GM12878 (cell line): ENCODE measurements at regions of chr2 and their contacts with region 1.

Region 1: DNA sequence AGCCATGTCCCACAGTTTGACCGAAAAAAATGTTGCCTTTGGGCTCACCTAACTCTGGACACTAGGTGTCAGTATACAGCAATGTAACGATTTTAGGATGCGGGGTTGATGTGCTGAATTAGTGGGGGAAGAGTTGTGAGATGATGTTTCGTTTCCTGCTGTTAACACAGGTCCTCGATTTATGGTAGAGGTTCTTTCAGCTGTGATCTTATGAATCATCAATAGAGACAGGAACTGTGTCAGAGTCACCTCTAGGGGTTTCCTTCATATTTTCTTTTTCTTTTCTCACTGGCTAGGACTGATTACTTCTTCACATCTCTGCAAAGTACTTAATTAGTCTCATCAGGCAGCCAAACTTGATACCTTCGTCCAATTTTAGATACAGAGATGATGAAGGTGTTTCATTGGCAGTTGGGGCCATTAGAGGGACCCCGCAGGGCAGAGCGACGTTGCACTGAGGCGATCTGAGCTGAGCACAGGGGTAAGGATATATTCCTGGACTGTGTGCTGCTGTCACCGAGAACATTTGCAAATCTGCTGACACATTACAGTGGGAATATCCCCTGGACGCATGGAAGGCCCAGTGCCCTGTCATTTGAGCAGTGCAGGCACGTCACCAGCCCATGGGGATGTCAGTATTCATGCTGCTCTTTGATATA is 10.2 kb upstream of the MMADHC start:
- DNase-seq: peak; percentile 57
- ATAC-seq: peak; percentile 96
- H3K4me3 ChIP-seq: no peak overlapping the region
- H3K27ac ChIP-seq: no peak overlapping the region
- H3K4me1 ChIP-seq: 0 out of 2 replicates have a peak, but pooled peaks cover 4% of the 10 kb centered on the region
- H3K27me3 ChIP-seq: no peaks in the 10 kb centered on the region
- CTCF ChIP-seq: peak; percentile 79 to 85 (median 85)
- EP300 ChIP-seq: no peak
- POLR2A ChIP-seq: no peak
- RAD21 ChIP-seq: peak; percentile 94

Region 2: GRCh38 chr2:149573760-149574159 is 24.0 kb before region 1 on chr2:
- CTCF ChIA-PET with region 1: no interaction called
- POLR2A ChIA-PET with region 1: no interaction called
- RAD21 ChIA-PET with region 1: no interaction called
- SMC1A ChIA-PET with region 1: no interaction called
- in situ Hi-C with region 1: no loop called
- intact Hi-C with region 1: no loop called
- DNase-seq: no peak
- ATAC-seq: no peak
- H3K4me3 ChIP-seq: no peak overlapping the region
- H3K27ac ChIP-seq: no peak overlapping the region
- H3K4me1 ChIP-seq: no peaks in the 10 kb centered on the region
- H3K27me3 ChIP-seq: no peaks in the 10 kb centered on the region
- CTCF ChIP-seq: peak in 1 of 3 experiments; percentile 2; a peak in 1 of 6 replicates
- EP300 ChIP-seq: no peak
- POLR2A ChIP-seq: no peak
- RAD21 ChIP-seq: no peak

Region 3: GRCh38 chr2:149715005-149715592 is 117.3 kb after region 1 on chr2:
- CTCF ChIA-PET with region 1: no interaction called
- POLR2A ChIA-PET with region 1: no interaction called
- RAD21 ChIA-PET with region 1: no interaction called
- SMC1A ChIA-PET with region 1: no interaction called
- in situ Hi-C with region 1: no loop called
- intact Hi-C with region 1: loop called (anchors 5 kb)
- DNase-seq: no peak
- ATAC-seq: peak; percentile 73
- H3K4me3 ChIP-seq: no peak overlapping the region
- H3K27ac ChIP-seq: no peak overlapping the region
- H3K4me1 ChIP-seq: no peaks in the 10 kb centered on the region
- H3K27me3 ChIP-seq: no peaks in the 10 kb centered on the region
- CTCF ChIP-seq: peak; percentile 37 to 45 (median 42); a peak in 5 of 6 replicates
- EP300 ChIP-seq: no peak
- POLR2A ChIP-seq: no peak
- RAD21 ChIP-seq: peak; percentile 23; the same call in 1 of the 2 replicates

Region 4: DNA sequence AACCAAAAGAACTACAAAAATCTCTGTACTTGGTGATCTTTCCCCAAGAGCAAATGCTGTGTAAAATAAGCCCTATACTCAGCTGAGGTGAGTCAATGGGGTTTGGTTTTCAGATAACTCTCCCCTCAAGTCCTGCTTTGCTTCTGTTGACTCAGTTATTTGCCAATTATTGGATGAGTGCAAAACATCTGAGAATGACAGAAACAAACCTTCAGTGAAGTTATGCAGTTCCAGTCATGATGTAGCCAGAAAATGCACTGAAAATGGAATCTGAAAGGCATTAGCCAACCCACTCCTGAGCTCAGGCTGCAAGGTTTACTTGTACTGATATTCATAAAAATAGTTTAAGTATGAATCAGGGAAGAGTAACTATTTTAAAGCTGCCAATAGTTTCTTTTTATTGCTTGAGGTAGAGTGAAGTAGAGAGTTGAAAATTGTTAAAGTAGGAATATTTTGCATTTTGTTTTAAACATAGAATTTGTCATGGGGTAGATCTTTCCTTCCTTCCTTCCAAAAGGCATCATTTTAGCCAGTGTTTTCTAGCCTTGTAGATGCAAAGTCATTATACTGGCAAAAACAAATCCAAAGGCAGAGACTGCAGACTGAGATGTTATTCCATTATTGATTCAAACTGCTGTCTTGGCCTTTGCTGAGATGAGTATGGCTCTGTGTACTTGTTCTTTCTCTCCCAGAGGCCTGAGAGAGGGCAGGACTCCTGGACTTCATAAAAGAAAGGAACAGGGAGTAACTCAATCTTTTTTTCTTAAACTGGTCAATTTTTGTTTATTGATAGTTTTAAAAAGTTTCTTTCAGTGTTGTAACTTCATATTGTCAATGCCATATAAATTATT is 674.4 kb after region 1 on chr2:
- CTCF ChIA-PET with region 1: no interaction called
- POLR2A ChIA-PET with region 1: no interaction called
- RAD21 ChIA-PET with region 1: no interaction called
- SMC1A ChIA-PET with region 1: no interaction called
- in situ Hi-C with region 1: no loop called
- intact Hi-C with region 1: no loop called
- DNase-seq: no peak
- ATAC-seq: no peak
- H3K4me3 ChIP-seq: no peak overlapping the region
- H3K27ac ChIP-seq: no peak overlapping the region
- H3K4me1 ChIP-seq: no peaks in the 10 kb centered on the region
- H3K27me3 ChIP-seq: no peaks in the 10 kb centered on the region
- CTCF ChIP-seq: no peak
- EP300 ChIP-seq: no peak
- POLR2A ChIP-seq: no peak
- RAD21 ChIP-seq: no peak

Region 5: GRCh38 chr2:150610671-150611279 is 1013.0 kb after region 1 on chr2:
- CTCF ChIA-PET with region 1: no interaction called
- POLR2A ChIA-PET with region 1: no interaction called
- RAD21 ChIA-PET with region 1: interaction called, 3 read pairs
- SMC1A ChIA-PET with region 1: no interaction called
- in situ Hi-C with region 1: loop called (anchors 10 kb)
- intact Hi-C with region 1: loop called (anchors 2 kb)
- DNase-seq: no peak
- ATAC-seq: peak; percentile 85
- H3K4me3 ChIP-seq: no peak overlapping the region
- H3K27ac ChIP-seq: no peak overlapping the region
- H3K4me1 ChIP-seq: no peaks in the 10 kb centered on the region
- H3K27me3 ChIP-seq: no peaks in the 10 kb centered on the region; a peak in 1 of 4 replicates
- CTCF ChIP-seq: peak; percentile 30 to 52 (median 46); a peak in 4 of 6 replicates
- EP300 ChIP-seq: no peak
- POLR2A ChIP-seq: no peak
- RAD21 ChIP-seq: peak; percentile 55

Region 6: GRCh38 chr2:151051574-151052220 is 1453.9 kb after region 1 on chr2:
- CTCF ChIA-PET with region 1: interaction called, 24 read pairs
- POLR2A ChIA-PET with region 1: no interaction called
- RAD21 ChIA-PET with region 1: interaction called, 13 read pairs
- SMC1A ChIA-PET with region 1: interaction called, 18 read pairs
- in situ Hi-C with region 1: loop called (anchors 5 kb)
- intact Hi-C with region 1: loop called (anchors 2 kb)
- DNase-seq: no peak
- ATAC-seq: peak; percentile 86
- H3K4me3 ChIP-seq: no peak overlapping the region
- H3K27ac ChIP-seq: no peak overlapping the region
- H3K4me1 ChIP-seq: no peaks in the 10 kb centered on the region
- H3K27me3 ChIP-seq: no peaks in the 10 kb centered on the region
- CTCF ChIP-seq: peak; percentile 67 to 81 (median 79)
- EP300 ChIP-seq: no peak
- POLR2A ChIP-seq: no peak
- RAD21 ChIP-seq: peak; percentile 72

Region 7: DNA sequence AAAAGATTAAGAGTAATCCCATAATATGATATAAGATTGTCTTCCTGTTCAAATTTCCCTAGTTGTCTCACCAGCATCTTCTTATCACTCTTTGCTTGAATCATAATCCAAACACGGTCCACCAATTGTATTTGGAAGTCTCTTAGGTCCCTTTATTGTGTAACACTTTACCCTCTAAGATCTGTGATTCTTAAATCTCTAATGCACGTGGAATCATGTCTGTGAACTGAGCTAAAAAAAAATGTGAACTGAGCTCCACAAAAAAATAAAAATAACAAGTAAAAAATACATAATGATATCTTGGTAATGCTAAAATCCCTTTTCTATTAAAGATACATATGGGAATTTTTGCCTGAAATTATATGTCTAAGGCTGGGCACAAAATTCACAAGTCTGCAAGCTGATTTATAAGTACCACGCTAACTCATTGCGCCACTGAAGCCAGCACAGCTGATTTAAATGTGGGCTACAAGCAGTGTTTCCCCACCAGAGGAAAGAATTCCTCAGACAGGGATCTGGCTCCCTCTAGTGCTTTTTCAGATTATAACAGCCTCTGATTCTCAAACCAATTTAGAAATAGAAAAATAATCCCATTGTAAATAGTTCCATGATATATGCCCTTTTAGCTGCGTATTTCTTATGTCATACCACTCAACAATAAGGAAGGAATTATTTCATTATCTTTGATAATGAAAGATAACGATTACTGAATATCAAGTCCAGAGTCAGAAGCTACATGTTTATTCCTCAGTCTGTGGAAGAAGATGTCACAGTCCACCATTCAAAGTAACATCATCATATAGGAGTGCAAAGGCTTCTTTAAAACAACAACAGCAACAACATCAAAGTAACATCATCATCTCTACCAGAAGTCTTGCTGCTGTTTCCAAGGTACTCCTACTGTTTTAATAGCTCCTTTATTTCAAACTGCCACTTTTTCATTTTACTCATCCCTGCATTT is 1641.0 kb after region 1 on chr2:
- CTCF ChIA-PET with region 1: interaction called, 48 read pairs
- POLR2A ChIA-PET with region 1: no interaction called
- RAD21 ChIA-PET with region 1: interaction called, 32 read pairs
- SMC1A ChIA-PET with region 1: interaction called, 13 read pairs
- in situ Hi-C with region 1: loop called (anchors 5 kb)
- intact Hi-C with region 1: loop called (anchors 1 kb)
- DNase-seq: peak; percentile 8
- ATAC-seq: peak; percentile 86
- H3K4me3 ChIP-seq: no peak overlapping the region
- H3K27ac ChIP-seq: no peak overlapping the region
- H3K4me1 ChIP-seq: no peaks in the 10 kb centered on the region
- H3K27me3 ChIP-seq: no peaks in the 10 kb centered on the region; a peak in 1 of 4 replicates
- CTCF ChIP-seq: peak; percentile 60 to 84 (median 75); a peak in 5 of 6 replicates
- EP300 ChIP-seq: no peak
- POLR2A ChIP-seq: no peak
- RAD21 ChIP-seq: peak; percentile 86

Region 8: GRCh38 chr2:151409601-151410484 is 1812.0 kb after region 1 on chr2 and contains the start of gene RIF1:
- CTCF ChIA-PET with region 1: no interaction called
- POLR2A ChIA-PET with region 1: no interaction called
- RAD21 ChIA-PET with region 1: no interaction called
- SMC1A ChIA-PET with region 1: no interaction called
- in situ Hi-C with region 1: loop called (anchors 25 kb)
- intact Hi-C with region 1: no loop called
- DNase-seq: peak; percentile 45
- ATAC-seq: peak; percentile 95
- H3K4me3 ChIP-seq: peak within 1 kb of the TSS; percentile 97
- H3K27ac ChIP-seq: peak within 1 kb of the TSS; percentile 91
- H3K4me1 ChIP-seq: no peaks in the 10 kb centered on the region
- H3K27me3 ChIP-seq: no peaks in the 10 kb centered on the region; a peak in 1 of 4 replicates
- CTCF ChIP-seq: peak; percentile 39 to 74 (median 41)
- EP300 ChIP-seq: no peak
- POLR2A ChIP-seq: peak; percentile 83
- RAD21 ChIP-seq: no peak
- polyA plus RNA-seq, gene RIF1: 6.3 to 9.7 TPM